Calu3 (cell line): ENCODE measurements at regions of chr1 and their contacts with region 1.

Region 1: DNA sequence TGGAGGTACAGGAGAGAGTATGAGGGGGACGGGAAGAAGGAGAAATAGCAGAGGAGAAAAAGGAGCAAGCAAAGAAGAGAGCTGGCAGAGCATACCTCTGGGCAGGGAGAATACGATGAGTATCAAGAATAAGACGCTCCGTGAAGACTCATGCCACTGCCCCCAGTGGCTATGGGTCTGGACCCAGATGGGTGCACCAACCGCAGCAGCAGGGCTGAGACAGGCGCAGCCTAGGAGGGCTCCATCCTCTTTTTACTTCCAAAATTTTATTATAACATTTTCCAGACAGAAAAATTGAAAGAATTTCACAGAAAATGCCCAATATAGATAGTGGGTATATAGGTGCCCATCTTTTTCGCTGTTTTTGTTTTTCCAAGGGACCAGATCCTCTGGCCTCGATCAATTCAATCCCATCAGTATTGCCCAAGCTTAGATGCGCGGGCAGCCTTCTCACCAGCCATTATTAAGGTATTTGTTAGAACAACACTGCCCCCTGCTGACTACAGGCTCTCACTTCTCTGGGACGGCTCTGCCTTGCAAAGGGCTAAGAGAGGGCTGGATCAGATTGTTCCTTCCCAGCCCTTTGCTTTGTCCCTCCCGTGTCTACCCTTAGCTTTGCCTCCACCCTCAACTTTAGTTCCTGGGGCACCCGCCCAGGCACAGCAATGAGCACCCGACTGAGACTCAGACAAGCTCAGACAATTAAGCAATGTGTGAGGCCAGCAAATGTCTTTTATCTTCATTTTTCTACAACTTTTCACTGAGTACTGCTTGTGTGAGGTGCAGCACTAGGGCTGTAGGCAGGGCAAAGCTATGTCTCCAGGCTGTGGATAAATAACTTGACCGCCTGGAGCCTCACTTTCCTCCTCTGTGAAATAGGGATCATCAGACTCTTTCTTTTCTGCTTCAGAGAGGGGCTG is 17.5 kb upstream of the CAMK1G start:
- DNase-seq: peak; percentile 90
- H3K4me3 Mint-ChIP-seq: no peak overlapping the region
- H3K27ac Mint-ChIP-seq: no peak overlapping the region
- H3K4me1 Mint-ChIP-seq: peaks cover 9% of the 10 kb centered on the region
- H3K27me3 Mint-ChIP-seq: peaks cover 95% of the 10 kb centered on the region
- CTCF ChIP-seq: peak; percentile 87

Region 2: DNA sequence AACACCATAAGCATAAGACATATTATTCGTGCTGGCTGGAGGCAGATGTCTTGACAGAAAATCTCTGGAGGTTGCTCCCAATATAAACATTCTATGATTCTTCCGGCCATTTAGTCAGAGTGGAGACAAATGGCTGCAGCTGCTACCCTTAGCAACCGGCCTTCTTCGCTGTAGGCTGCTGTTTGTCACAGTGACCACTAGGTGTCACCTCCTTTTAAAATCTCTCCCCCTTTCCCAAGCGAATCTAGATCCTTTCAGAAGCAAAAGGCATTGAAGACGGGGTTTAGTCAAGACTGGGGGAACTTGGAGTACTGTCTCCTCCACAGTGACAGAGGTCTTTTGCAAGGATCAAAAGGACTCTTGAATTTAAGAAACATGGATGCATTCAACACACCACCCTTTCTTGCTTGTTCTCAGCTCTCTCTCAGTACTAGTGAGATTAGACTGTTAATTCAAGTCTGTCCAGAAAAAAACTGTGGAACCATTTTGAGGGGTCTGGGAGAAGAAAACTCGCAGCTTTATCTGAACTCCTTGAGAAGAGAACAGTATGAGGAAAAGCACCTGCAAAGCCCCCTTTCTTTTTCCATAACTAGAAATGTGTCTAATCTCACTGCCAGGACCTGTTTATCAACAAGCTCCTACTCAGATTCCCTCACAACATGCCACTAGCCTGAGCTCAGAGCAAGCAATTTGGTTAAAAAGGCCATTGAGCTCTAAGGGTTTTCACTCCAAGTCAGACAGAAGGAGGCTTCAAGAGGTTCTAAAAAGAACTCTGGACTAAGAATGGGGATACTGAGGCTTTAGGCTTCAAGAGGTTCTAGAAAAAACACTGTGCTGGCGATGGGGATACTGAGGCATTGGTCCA is 913.5 kb before region 1 on chr1:
- CTCF ChIA-PET with region 1: interaction called, 3 read pairs
- intact Hi-C with region 1: loop called (anchors 1 kb)
- DNase-seq: peak; percentile 46
- H3K4me3 Mint-ChIP-seq: no peak overlapping the region
- H3K27ac Mint-ChIP-seq: no peak overlapping the region
- H3K4me1 Mint-ChIP-seq: no peaks in the 10 kb centered on the region
- H3K27me3 Mint-ChIP-seq: peaks cover 51% of the 10 kb centered on the region
- CTCF ChIP-seq: peak; percentile 69

Region 3: DNA sequence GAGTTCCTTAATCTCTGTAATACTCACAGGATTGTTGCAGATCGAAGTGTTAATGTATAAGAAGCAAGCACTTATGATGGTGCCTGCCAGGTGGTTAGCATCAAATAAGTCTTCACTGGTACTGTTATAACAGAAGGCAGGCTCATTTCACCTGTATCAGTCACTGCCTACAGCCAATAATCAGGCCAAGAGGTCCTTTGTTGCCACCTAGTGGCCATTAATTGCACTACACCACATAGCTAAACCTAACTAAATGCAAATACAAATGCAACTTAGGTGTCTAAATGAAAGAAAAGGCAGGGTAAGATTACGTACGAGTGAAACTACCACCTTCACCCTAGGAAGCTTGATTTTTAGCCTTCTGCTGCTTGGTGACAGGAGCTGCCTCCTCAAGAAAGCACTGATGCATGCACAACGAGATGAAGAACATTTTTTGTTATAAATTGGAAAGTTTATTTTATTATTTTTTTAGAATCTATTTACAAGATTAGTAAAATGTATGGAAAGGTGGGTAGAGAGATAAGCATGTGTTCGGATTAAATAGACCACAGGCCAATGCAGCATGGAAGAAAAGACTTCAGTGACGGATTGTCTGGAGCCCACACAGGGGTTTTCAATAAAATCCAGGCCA is 317.3 kb before region 1 on chr1:
- CTCF ChIA-PET with region 1: interaction called, 5 read pairs
- intact Hi-C with region 1: loop called (anchors 2 kb)
- DNase-seq: peak; percentile 79
- H3K4me3 Mint-ChIP-seq: no peak overlapping the region
- H3K27ac Mint-ChIP-seq: no peak overlapping the region
- H3K4me1 Mint-ChIP-seq: no peaks in the 10 kb centered on the region
- H3K27me3 Mint-ChIP-seq: peaks cover 42% of the 10 kb centered on the region
- CTCF ChIP-seq: peak; percentile 95

Region 4: DNA sequence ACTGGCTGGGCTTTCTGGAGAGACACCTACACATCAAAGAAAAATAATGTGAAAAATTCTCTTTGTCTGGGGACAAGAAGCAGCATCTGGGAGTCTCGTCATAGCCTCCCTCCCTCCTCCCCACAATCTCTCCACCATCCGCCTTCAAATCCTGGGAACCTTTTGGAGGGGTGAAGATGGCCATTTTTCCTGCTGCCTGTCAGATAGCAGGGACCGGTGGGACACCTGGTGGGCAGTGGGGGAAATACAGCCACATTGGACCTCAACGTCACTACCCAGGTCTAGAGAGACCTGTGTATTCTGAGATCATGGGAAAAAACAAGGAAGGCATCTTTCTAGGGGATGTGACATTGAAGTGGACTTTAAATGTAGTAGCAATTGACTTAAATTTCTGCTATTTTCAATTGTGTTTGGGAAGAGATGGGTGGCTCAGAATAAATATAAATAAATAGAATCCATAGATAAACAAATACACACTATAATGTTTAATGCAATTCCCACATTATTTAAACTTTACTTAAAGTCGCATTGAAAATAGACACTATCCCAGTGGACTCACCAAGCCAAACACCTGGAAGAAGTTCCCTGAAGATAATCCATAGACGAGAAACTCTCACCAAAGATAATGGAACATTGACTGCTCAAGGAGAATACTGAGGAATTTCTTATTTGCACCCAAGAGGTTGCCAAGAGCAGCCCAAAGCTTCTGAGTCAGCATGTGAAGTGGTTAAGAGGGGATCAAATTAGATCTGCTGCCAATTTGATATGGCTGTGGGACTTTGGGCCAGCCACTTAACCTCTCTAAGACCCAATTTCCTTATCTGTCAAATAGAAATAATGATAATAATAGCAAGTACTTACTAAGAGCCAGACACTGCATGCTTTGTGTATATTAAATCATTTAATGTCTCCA is 130.1 kb before region 1 on chr1:
- CTCF ChIA-PET with region 1: interaction called, 5 read pairs
- intact Hi-C with region 1: loop called (anchors 1 kb)
- DNase-seq: peak; percentile 94
- H3K4me3 Mint-ChIP-seq: no peak overlapping the region
- H3K27ac Mint-ChIP-seq: no peak overlapping the region
- H3K4me1 Mint-ChIP-seq: peaks cover 20% of the 10 kb centered on the region
- H3K27me3 Mint-ChIP-seq: peaks cover 17% of the 10 kb centered on the region
- CTCF ChIP-seq: peak; percentile 92

Region 5: GRCh38 chr1:209513226-209513625 is 52.8 kb before region 1 on chr1:
- CTCF ChIA-PET with region 1: no interaction called
- intact Hi-C with region 1: loop called (anchors 5 kb)
- DNase-seq: peak; percentile 21
- H3K4me3 Mint-ChIP-seq: no peak overlapping the region
- H3K27ac Mint-ChIP-seq: no peak overlapping the region
- H3K4me1 Mint-ChIP-seq: no peaks in the 10 kb centered on the region
- H3K27me3 Mint-ChIP-seq: peaks cover 47% of the 10 kb centered on the region
- CTCF ChIP-seq: peak; percentile 62

Region 6: DNA sequence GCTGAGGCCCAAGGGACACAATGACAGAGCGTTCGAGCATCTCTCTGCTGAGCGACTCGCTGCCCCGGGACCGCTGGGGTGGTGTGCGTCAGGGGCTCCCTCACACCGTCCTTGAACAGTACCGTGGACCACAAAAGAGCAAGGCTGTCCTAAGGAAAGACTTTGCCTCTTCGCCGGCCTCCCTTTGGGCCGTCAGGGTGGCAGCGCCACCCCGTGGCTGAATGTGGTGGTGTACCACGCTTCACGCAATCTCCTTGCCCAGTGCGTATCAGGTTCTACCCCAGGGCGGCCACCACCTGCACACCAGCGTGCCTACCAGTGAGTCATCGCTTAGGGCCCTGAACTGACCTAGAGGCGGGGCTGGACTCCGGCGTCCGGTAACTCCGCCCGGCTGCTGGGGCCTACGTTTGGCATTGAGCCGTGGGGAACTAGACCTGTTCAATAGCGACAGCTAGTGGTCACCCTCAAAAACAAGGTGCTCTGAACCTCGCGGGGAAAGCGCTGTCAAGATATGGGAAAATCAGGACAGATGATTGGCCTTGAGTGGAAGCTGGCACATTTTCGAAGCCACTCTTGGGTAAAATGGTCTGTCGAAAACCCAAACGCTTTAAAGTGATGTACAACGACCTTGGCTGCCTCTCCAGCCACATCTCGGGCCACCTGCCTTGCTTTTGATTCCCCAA is 181.7 kb after region 1 on chr1:
- CTCF ChIA-PET with region 1: interaction called, 11 read pairs
- intact Hi-C with region 1: loop called (anchors 1 kb)
- DNase-seq: peak; percentile 99
- H3K4me3 Mint-ChIP-seq: peak overlapping the region; percentile 14
- H3K27ac Mint-ChIP-seq: no peak overlapping the region
- H3K4me1 Mint-ChIP-seq: peaks cover 16% of the 10 kb centered on the region
- H3K27me3 Mint-ChIP-seq: no peaks in the 10 kb centered on the region
- CTCF ChIP-seq: peak; percentile 95